Activated CD4-positive, alpha-beta T cell treated with anti-CD3 and anti-CD28 coated beads for 36 hours (primary cell): ENCODE measurements at regions of chr1 and their contacts with region 1.

Region 1: GRCh38 chr1:23367791-23368561 is 1.7 kb downstream of the ZNF436 start:
- DNase-seq: peak; percentile 99
- ATAC-seq: peak; percentile 95
- H3K4me3 Mint-ChIP-seq: peak overlapping the region; percentile 93
- H3K27ac Mint-ChIP-seq: peak overlapping the region; percentile 98
- H3K4me1 Mint-ChIP-seq: peaks cover 27% of the 10 kb centered on the region
- H3K27me3 Mint-ChIP-seq: no peaks in the 10 kb centered on the region

Region 2: DNA sequence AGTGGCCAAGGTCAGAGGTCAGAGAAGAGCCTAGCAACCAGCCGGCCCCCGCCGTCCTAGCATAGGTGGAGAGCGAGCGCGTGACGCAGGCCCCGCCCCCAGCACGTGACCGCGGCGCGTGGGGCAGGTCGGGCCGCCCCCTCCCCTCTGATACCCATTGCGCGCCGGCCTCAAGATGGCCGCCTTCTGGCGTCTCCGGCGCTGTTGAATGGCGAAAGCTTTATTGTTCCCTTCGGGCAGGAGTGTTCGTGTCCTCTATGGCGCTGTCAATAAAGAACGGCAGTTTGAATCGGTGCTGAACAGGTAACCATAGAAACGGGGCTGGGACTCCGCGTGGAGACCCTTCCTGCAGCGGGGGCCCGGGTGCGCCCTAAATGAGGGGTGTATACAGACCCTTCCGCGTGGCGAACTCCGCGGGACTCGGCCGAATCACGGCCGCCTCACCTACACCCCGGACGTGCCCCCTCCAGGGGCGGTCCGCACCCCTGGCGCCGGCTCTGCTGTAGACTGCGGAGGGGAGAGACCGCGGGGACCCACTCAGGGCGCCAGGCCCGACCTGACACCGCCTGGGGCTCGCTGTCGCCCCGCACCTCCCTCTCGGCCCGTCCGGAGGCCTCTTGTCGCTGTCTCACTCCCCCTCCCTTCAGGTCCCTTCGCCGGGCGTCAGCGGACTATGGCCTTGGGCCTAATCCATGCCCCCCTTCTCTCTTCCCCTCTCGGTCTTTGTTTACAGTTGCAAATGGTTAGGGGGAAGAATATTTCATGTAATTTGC is 916.1 kb before region 1 on chr1 and contains the start of gene ZBTB40:
- CTCF ChIA-PET with region 1: no interaction called
- POLR2A ChIA-PET with region 1: no interaction called
- intact Hi-C with region 1: loop called in 1 of 2 experiments (anchors 5 kb)
- DNase-seq: peak; percentile 98
- ATAC-seq: peak; percentile 97
- H3K4me3 Mint-ChIP-seq: peak within 1 kb of the TSS; percentile 94
- H3K27ac Mint-ChIP-seq: peak within 1 kb of the TSS; percentile 90
- H3K4me1 Mint-ChIP-seq: peaks cover 41% of the 10 kb centered on the region
- H3K27me3 Mint-ChIP-seq: no peaks in the 10 kb centered on the region
- total RNA-seq, gene ZBTB40: 12.7 to 13.5 TPM

Region 3: GRCh38 chr1:23344111-23344986 is 23.6 kb before region 1 on chr1 and contains the start of gene HNRNPR:
- CTCF ChIA-PET with region 1: interaction called, 10 read pairs
- POLR2A ChIA-PET with region 1: interaction called, 47 read pairs
- intact Hi-C with region 1: loop called (anchors 1 kb)
- DNase-seq: peak; percentile 100
- ATAC-seq: peak; percentile 97
- H3K4me3 Mint-ChIP-seq: peak within 1 kb of the TSS; percentile 85
- H3K27ac Mint-ChIP-seq: peak within 1 kb of the TSS; percentile 96
- H3K4me1 Mint-ChIP-seq: peaks cover 35% of the 10 kb centered on the region
- H3K27me3 Mint-ChIP-seq: no peaks in the 10 kb centered on the region
- total RNA-seq, gene HNRNPR: 190 to 210 TPM

Region 4: GRCh38 chr1:23539698-23540266 is 171.8 kb after region 1 on chr1:
- CTCF ChIA-PET with region 1: no interaction called
- POLR2A ChIA-PET with region 1: no interaction called
- intact Hi-C with region 1: loop called in 1 of 2 experiments (anchors 2 kb)
- DNase-seq: peak; percentile 95
- ATAC-seq: peak; percentile 95
- H3K4me3 Mint-ChIP-seq: peak overlapping the region; percentile 18
- H3K27ac Mint-ChIP-seq: peak overlapping the region; percentile 61
- H3K4me1 Mint-ChIP-seq: peaks cover 13% of the 10 kb centered on the region
- H3K27me3 Mint-ChIP-seq: no peaks in the 10 kb centered on the region

Region 5: GRCh38 chr1:23577056-23578004 is 209.4 kb after region 1 on chr1:
- CTCF ChIA-PET with region 1: no interaction called
- POLR2A ChIA-PET with region 1: no interaction called
- intact Hi-C with region 1: no loop called
- DNase-seq: peak; percentile 73
- ATAC-seq: peak; percentile 98
- H3K4me3 Mint-ChIP-seq: peak overlapping the region; percentile 8
- H3K27ac Mint-ChIP-seq: peak overlapping the region; percentile 79
- H3K4me1 Mint-ChIP-seq: peaks cover 47% of the 10 kb centered on the region
- H3K27me3 Mint-ChIP-seq: no peaks in the 10 kb centered on the region

Region 6: DNA sequence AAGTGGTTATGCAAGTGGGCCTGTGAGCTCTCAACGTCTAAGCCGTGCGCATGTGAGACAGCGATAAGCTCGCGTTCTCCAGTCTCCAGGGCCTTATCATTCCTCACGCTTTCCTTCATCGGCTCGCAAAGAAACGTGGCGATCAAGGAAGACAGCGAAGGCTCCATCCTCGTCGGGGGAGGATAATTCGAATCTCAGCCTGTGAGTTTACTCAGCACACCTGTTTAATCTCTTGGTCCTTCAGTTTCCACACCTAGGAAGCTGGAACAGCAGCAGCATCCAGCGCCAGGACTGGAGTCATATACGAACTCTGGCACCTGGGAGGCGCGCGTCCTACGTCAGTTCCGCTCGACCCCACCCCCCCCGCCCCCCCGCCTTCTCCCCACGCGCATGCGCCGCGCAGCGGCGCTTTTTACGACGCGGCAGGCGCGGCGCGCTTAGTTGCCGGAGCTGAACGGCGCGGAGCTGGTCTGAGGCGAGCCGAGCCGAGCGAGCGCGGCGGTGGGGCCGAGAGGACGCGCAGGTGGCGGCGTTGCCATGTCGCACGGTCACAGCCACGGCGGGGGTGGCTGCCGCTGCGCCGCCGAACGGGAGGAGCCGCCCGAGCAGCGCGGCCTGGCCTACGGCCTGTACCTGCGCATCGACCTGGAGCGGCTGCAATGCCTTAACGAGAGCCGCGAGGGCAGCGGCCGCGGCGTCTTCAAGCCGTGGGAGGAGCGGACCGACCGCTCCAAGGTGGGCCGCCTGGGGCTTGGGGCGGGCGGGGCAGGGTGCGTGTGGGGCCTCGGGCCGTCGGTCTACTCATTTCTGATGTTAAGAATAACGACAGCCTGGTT is 410.2 kb after region 1 on chr1 and contains the start of gene PITHD1:
- CTCF ChIA-PET with region 1: no interaction called
- POLR2A ChIA-PET with region 1: no interaction called
- intact Hi-C with region 1: loop called in 1 of 2 experiments (anchors 1 kb)
- DNase-seq: peak; percentile 90
- ATAC-seq: peak; percentile 87
- H3K4me3 Mint-ChIP-seq: peak within 1 kb of the TSS; percentile 87
- H3K27ac Mint-ChIP-seq: peak within 1 kb of the TSS; percentile 87
- H3K4me1 Mint-ChIP-seq: peaks cover 43% of the 10 kb centered on the region
- H3K27me3 Mint-ChIP-seq: no peaks in the 10 kb centered on the region
- total RNA-seq, gene PITHD1: 53.1 to 64.1 TPM

Region 7: DNA sequence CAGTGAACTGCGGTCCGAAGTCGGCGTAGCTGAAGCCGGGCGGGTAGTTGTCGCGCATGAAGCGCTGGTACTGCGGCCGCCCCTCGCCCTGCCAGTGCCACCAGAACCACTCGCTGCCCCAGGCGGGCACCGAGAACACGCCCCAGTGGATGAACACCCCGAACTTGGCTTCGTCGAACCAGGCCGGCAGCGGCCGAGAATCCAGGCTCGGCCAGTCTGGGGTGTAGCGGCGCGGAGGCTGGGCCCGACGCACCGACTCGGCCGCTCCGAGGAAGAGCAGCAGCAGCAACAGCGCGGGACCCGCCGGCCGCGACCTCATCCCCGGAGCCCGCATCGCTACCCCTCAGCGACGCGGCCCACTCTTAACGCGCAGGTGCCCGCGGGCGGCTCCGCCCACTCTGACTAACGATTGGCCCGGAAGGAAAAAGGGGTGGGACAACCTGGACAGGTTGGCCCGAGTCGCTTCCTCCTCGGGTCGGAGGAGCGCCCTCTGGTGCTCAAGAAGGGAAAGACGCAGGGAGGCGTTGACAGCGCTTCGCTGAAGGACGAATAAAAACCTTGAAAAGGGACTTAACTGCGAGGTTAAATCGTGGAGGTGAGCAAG is 500.1 kb after region 1 on chr1 and contains the start of gene FUCA1:
- CTCF ChIA-PET with region 1: no interaction called
- POLR2A ChIA-PET with region 1: no interaction called
- intact Hi-C with region 1: loop called in 1 of 2 experiments (anchors 2 kb)
- DNase-seq: peak; percentile 95
- ATAC-seq: peak; percentile 97
- H3K4me3 Mint-ChIP-seq: peak within 1 kb of the TSS; percentile 76
- H3K27ac Mint-ChIP-seq: peak within 1 kb of the TSS; percentile 77
- H3K4me1 Mint-ChIP-seq: peaks cover 19% of the 10 kb centered on the region
- H3K27me3 Mint-ChIP-seq: no peaks in the 10 kb centered on the region
- total RNA-seq, gene FUCA1: 4.2 to 4.5 TPM